ENCODE measurements at regions of chr10 and their contacts with region 1.

Region 1: GRCh38 chr10:43348511-43349312 is 22.7 kb upstream of the FXYD4 start:
- H3K4me3 Mint-ChIP-seq: no peak overlapping the region
- H3K27ac Mint-ChIP-seq: no peak overlapping the region
- H3K4me1 Mint-ChIP-seq: peaks cover 16% of the 10 kb centered on the region
- H3K27me3 Mint-ChIP-seq: peaks cover 38% of the 10 kb centered on the region

Region 2: DNA sequence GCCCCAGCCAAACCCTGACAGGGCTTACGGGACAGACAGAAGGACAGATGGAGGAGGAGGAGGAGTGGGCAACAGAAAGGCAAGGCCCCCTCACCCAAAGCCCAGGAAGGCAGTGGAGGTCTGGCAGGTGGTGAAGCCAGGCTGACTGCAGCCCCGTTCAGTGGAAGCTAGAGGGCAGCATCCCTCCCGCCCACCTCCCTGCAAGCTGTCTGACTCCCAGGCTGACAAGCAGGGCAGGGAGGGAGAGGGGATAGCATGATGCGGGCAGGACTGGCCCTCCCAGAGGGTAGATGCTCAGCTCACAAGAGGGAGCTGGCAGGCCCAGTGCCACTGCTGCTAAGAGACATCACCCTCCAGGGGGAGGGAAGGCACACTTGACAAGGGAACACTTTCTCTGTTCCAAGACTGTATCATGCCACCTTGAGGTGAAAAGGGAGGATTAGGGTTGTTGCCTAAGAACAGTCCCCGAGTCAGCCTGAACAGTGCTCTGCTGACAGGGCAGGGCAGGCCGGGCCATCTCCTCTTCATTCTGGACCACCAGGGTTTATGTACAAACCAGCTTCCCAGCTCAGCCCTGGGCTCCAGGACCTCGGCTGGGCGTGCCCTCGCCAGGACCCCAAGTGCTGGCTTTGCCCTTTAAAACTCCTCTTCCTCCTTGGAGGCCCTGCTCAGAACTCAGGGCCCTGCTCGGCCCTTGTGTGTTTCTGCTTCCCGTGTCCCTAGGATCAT is 143.6 kb before region 1 on chr10:
- intact Hi-C with region 1: loop called (anchors 5 kb)
- H3K4me3 Mint-ChIP-seq: no peak overlapping the region
- H3K27ac Mint-ChIP-seq: no peak overlapping the region
- H3K4me1 Mint-ChIP-seq: peaks cover 27% of the 10 kb centered on the region
- H3K27me3 Mint-ChIP-seq: no peaks in the 10 kb centered on the region

Region 3: DNA sequence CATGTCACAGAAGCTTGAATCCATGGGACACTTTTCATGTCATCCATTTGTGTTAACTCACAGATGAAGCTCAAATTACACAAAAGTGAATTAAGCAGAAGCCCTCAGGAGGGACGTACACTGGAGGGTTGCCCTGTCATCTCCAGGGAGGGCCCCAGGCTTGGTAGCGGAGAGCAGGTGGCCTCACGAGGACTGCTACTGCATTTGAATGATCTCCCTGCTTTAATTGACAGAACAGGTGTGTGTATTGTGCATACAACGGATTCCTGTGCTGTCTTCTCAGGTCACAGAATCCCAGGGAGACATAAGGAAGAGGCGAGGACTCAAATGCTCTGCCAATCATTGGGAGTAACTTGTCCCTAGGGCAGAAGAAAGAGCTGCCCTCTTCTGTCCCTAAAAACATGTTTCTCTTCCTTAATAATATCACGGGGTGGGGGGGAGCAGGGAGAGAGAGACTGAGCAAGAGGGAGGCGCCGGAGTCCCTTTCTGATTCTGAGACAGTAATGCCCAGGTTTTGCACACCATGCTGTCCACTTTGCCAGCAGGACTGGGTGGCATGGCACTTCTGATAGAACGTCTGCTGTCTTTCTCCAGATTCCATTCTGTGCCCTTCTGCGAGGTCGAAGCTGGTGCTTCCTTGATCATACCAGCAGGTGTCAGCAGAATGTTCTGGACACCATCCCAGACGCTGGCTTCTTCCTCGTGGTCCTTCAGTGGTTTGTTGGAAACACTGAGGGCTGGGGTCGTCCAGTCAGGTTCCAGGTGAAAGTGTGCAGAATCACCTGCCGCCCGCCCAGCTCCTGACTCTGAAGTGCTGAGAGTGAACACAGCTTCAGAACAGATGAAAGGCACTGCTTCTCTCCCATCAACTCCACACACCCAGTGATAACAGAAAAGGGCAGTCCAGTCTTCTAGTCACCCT is 55.7 kb before region 1 on chr10:
- intact Hi-C with region 1: loop called (anchors 1 kb)
- H3K4me3 Mint-ChIP-seq: peak overlapping the region; percentile 49
- H3K27ac Mint-ChIP-seq: peak overlapping the region; percentile 21
- H3K4me1 Mint-ChIP-seq: peaks cover 6% of the 10 kb centered on the region
- H3K27me3 Mint-ChIP-seq: peaks cover 5% of the 10 kb centered on the region

Region 4: GRCh38 chr10:43322769-43323168 is 25.9 kb before region 1 on chr10:
- intact Hi-C with region 1: no loop called
- H3K4me3 Mint-ChIP-seq: peak overlapping the region; percentile 59
- H3K27ac Mint-ChIP-seq: no peak overlapping the region
- H3K4me1 Mint-ChIP-seq: peaks cover 20% of the 10 kb centered on the region
- H3K27me3 Mint-ChIP-seq: peaks cover 18% of the 10 kb centered on the region

Region 5: GRCh38 chr10:43667317-43667731 is 318.6 kb after region 1 on chr10:
- intact Hi-C with region 1: no loop called
- H3K4me3 Mint-ChIP-seq: no peak overlapping the region
- H3K27ac Mint-ChIP-seq: no peak overlapping the region
- H3K4me1 Mint-ChIP-seq: no peaks in the 10 kb centered on the region
- H3K27me3 Mint-ChIP-seq: peaks cover 46% of the 10 kb centered on the region